ENCODE measurements at regions of chr1 and their contacts with region 1.

Region 1: GRCh38 chr1:159600894-159601293 is 13.3 kb downstream of the APCS start:
- DNase-seq: no peak
- ATAC-seq: no peak
- H3K4me3 ChIP-seq: no peak overlapping the region
- H3K27ac ChIP-seq: no peak overlapping the region
- H3K4me1 ChIP-seq: no peaks in the 10 kb centered on the region
- H3K27me3 ChIP-seq: no peaks in the 10 kb centered on the region
- CTCF ChIP-seq: no peak
- EP300 ChIP-seq: no peak
- POLR2A ChIP-seq: no peak
- RAD21 ChIP-seq: no peak

Region 2: DNA sequence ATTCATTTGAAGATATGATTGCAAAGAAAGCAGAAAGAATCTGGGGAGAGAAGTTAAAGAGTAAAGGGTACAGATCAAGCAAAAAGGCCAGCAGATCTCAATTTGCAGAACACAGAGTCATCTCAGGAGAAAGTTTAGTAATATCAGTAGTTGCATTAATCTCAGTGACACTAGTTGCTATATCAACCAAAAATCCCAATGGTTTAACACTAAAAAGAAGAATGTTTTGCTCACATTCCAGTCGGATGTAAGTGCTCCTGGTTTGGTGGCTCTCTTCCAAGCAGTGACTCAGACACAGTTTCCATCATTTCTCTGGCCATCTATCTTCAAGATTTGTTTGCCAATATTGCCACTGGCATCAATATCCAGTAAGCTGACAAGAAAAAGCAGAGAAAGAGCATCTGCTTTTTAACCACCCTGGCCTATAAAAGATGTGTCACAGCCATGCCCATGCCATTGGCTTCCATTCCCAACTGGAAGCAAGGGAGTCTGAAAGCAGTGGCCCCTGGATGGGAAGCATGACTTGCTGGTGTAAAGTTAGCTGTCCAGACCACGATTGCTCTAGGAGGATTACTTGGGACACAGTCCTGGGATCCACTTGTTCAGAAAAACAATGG is 478.8 kb before region 1 on chr1:
- CTCF ChIA-PET with region 1: no interaction called
- POLR2A ChIA-PET with region 1: no interaction called
- in situ Hi-C with region 1: no loop called
- intact Hi-C with region 1: loop called (anchors 10 kb)
- DNase-seq: no peak
- ATAC-seq: no peak
- H3K4me3 ChIP-seq: no peak overlapping the region
- H3K27ac ChIP-seq: no peak overlapping the region
- H3K4me1 ChIP-seq: no peaks in the 10 kb centered on the region
- H3K27me3 ChIP-seq: peaks cover 0 to 8% of the 10 kb centered on the region in 2 experiments; a peak in 2 of 5 replicates
- CTCF ChIP-seq: no peak
- EP300 ChIP-seq: no peak
- POLR2A ChIP-seq: no peak
- RAD21 ChIP-seq: no peak

Region 3: DNA sequence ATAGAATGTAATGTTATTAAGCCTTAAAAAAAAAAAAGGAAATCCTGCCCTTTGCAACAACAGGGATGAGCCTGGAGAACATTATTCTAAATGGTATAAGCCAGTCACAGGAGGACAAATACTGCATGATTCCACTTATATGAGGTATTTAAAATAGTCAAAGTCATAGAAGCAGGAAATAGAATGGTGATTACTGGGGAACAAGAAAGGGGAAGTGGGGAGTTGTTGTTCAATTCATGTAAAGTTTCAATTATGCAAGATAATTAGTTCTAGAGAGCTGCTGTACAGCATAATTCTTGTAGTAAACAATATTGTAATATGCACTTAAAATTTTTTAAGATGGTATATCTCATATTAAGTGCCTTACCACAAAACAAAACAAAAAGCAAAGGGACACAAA is 285.5 kb before region 1 on chr1:
- CTCF ChIA-PET with region 1: no interaction called
- POLR2A ChIA-PET with region 1: no interaction called
- in situ Hi-C with region 1: no loop called
- intact Hi-C with region 1: no loop called
- DNase-seq: no peak
- ATAC-seq: no peak
- H3K4me3 ChIP-seq: no peak overlapping the region
- H3K27ac ChIP-seq: no peak overlapping the region
- H3K4me1 ChIP-seq: no peaks in the 10 kb centered on the region
- H3K27me3 ChIP-seq: no peaks in the 10 kb centered on the region
- CTCF ChIP-seq: no peak
- EP300 ChIP-seq: no peak
- POLR2A ChIP-seq: no peak
- RAD21 ChIP-seq: no peak

Measured in HepG2 (cell line).